ENCODE measurements at regions of chr9 and their contacts with region 1.

Region 1: DNA sequence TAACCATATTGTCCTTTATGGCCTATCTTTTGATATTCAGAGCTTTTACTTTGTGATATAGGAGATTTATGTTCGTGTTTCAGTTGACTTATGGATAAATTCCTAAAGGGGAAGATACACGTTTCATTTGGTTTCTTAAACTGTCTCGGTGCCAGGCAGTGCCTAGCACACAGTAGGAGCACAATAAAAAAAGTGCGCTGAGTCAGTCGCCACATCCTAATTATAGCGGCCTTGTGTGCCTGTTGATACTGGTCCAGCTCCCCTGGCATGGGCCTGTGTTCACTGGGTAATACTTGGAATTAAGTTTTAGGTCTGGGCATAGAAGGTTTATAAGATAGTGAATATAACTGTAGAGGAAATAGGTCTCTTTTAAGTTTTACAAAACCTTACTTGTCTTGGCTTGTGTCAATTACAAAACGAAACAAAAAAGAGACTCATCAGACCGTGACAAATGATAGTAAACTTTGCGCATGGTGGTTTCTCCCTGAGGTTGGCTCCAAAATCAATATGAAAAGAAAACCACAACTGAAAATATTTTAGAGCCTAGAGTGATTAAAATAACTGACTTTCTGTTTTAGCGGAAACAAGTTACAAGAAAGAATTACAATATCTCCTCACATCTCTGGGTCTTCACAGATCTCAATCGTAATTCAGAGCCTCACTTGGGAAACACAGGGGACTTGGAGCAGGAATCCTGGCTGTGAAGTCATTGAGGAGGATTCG is 84.8 kb downstream of the MVB12B start:
- DNase-seq: peak; percentile 86
- H3K4me3 Mint-ChIP-seq: peak overlapping the region; percentile 47
- H3K27ac Mint-ChIP-seq: peak overlapping the region; percentile 45
- H3K4me1 Mint-ChIP-seq: peaks cover 39% of the 10 kb centered on the region
- H3K27me3 Mint-ChIP-seq: peaks cover 5% of the 10 kb centered on the region

Region 2: GRCh38 chr9:126093771-126094170 is 317.6 kb before region 1 on chr9:
- intact Hi-C with region 1: no loop called
- DNase-seq: no peak
- H3K4me3 Mint-ChIP-seq: no peak overlapping the region
- H3K27ac Mint-ChIP-seq: no peak overlapping the region
- H3K4me1 Mint-ChIP-seq: no peaks in the 10 kb centered on the region
- H3K27me3 Mint-ChIP-seq: no peaks in the 10 kb centered on the region

Region 3: DNA sequence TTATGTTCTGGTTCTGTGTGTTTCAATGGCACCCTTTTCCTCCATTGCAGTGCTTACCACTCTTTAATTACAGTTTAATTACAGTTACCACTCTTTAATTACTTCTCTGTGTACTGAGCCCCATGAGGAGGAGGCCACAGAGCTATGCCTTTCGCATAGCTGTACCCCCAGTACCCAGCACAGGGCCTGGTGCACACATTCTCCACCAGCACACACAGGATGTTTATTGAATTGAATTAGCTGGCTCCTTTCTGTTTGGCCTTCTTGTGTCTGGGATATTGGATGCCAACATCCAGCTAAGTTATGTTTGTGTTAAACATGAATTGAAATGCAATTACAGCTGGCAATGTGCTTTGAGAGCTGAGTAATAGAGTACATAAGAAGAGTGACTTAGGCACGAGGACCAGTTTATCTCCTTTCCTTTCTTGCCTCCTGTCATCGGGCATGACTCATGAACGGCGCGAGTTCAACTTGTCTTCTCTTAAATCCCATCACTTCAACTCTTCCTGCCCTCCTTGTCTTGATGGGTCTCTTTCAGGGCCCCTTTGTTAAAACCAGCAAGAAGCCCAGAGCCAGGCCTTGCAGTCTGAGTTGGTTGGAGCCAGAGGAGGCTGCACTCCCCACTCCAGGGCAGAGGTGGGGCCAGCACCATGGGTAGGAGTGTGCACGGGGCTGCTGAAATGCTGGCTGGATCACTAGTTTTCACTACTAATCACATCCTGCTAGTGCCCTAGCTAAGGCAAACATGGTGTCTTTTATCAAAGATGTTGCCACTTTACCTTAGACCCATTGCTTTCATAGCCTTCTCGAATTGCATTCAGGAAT is 47.3 kb before region 1 on chr9:
- intact Hi-C with region 1: no loop called
- DNase-seq: no peak
- H3K4me3 Mint-ChIP-seq: no peak overlapping the region
- H3K27ac Mint-ChIP-seq: no peak overlapping the region
- H3K4me1 Mint-ChIP-seq: no peaks in the 10 kb centered on the region
- H3K27me3 Mint-ChIP-seq: peaks cover 3% of the 10 kb centered on the region

Region 4: GRCh38 chr9:126471084-126471624 is 59.8 kb after region 1 on chr9:
- intact Hi-C with region 1: loop called (anchors 2 kb)
- DNase-seq: peak; percentile 94
- H3K4me3 Mint-ChIP-seq: peak overlapping the region; percentile 64
- H3K27ac Mint-ChIP-seq: peak overlapping the region; percentile 78
- H3K4me1 Mint-ChIP-seq: peaks cover 47% of the 10 kb centered on the region
- H3K27me3 Mint-ChIP-seq: peaks cover 52% of the 10 kb centered on the region